A549 (cell line): ENCODE measurements at regions of chr15 and their contacts with region 1.

Region 1: GRCh38 chr15:89129123-89129815 is 41.0 kb downstream of the ABHD2 start:
- DNase-seq: peak; percentile 63 to 68
- ATAC-seq: peak; percentile 60 to 79; a peak in 3 of 6 replicates
- H3K4me3 ChIP-seq: no peak overlapping the region
- H3K27ac ChIP-seq: peak overlapping the region; percentile 69 to 74
- H3K4me1 ChIP-seq: peaks cover 57% of the 10 kb centered on the region
- CTCF ChIP-seq: peak; percentile 95
- EP300 ChIP-seq: no peak
- POLR2A ChIP-seq: no peak
- RAD21 ChIP-seq: peak; percentile 84 to 86

Region 2: GRCh38 chr15:89068325-89068784 is 60.9 kb before region 1 on chr15:
- CTCF ChIA-PET with region 1: interaction called, 18 read pairs
- POLR2A ChIA-PET with region 1: interaction called, 6 read pairs
- DNase-seq: peak in 1 of 2 experiments; percentile 46
- ATAC-seq: peak; percentile 67; a peak in 4 of 6 replicates
- H3K4me3 ChIP-seq: no peak overlapping the region
- H3K27ac ChIP-seq: peak overlapping the region; percentile 34 to 57; a peak in 4 of 6 replicates
- H3K4me1 ChIP-seq: peaks cover 25% of the 10 kb centered on the region; the same call in 2 of the 3 replicates
- CTCF ChIP-seq: no peak
- EP300 ChIP-seq: no peak
- POLR2A ChIP-seq: no peak
- RAD21 ChIP-seq: no peak

Region 3: GRCh38 chr15:89087830-89088604 is 41.3 kb before region 1 on chr15 and contains the start of gene ABHD2:
- CTCF ChIA-PET with region 1: interaction called, 76 read pairs
- POLR2A ChIA-PET with region 1: interaction called, 12 read pairs
- DNase-seq: peak; percentile 100
- ATAC-seq: peak; percentile 92 to 98
- H3K4me3 ChIP-seq: peak within 1 kb of the TSS; percentile 78
- H3K27ac ChIP-seq: peak within 1 kb of the TSS; percentile 80 to 88
- H3K4me1 ChIP-seq: peaks cover 44% of the 10 kb centered on the region
- CTCF ChIP-seq: no peak
- EP300 ChIP-seq: no peak
- POLR2A ChIP-seq: peak; percentile 70
- RAD21 ChIP-seq: 0 out of 5 replicates have a peak, but pooled peaks of 1 of the 2 experiments have one; percentile 30
- polyA plus RNA-seq, gene ABHD2: 63.3 and 76.4 TPM in 2 replicates

Region 4: DNA sequence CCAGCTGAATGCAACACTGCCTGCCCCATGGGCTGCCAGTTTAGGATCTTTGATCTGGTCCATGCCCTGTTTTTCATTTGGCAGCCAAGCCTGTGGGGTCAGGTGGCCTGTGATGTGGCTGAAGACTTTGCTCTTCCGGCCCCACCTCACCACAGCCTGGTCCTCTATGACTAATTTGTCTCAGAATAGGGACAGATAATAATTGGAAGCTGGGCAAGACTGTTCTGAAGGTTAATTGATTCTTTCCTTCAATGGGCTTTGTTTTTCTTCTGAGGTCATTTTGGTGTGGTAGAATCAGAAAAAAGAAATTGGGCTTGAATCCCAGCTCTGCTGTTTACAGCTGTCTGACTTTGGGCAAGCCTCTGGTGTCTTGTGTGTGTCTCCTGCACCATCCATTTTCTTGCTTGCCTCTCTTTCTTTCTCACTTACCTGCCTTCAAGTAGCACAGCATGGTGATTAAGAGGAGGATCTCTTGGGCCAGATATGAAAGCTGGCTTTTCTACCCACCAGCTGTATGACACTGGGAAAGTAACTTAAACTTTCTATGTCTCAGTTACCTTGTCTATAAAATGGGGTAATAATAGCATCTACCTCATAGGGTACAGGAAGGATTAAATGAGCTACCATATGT is 16.8 kb before region 1 on chr15:
- CTCF ChIA-PET with region 1: interaction called, 176 read pairs
- POLR2A ChIA-PET with region 1: no interaction called
- DNase-seq: peak in 1 of 2 experiments; percentile 71
- ATAC-seq: peak; percentile 55 to 65; a peak in 4 of 6 replicates
- H3K4me3 ChIP-seq: no peak overlapping the region
- H3K27ac ChIP-seq: peak overlapping the region; percentile 87 to 95
- H3K4me1 ChIP-seq: peaks cover 85% of the 10 kb centered on the region
- CTCF ChIP-seq: no peak
- EP300 ChIP-seq: 0 out of 5 replicates have a peak, but pooled peaks of 1 of the 2 experiments have one; percentile 16
- POLR2A ChIP-seq: no peak
- RAD21 ChIP-seq: no peak

Region 5: GRCh38 chr15:89150762-89151664 is 21.7 kb after region 1 on chr15:
- CTCF ChIA-PET with region 1: interaction called, 11 read pairs
- POLR2A ChIA-PET with region 1: no interaction called
- DNase-seq: no peak
- ATAC-seq: no peak
- H3K4me3 ChIP-seq: no peak overlapping the region
- H3K27ac ChIP-seq: no peak overlapping the region
- H3K4me1 ChIP-seq: peaks cover 7% of the 10 kb centered on the region; the same call in 2 of the 3 replicates
- CTCF ChIP-seq: no peak
- EP300 ChIP-seq: no peak
- POLR2A ChIP-seq: no peak
- RAD21 ChIP-seq: no peak

Region 6: DNA sequence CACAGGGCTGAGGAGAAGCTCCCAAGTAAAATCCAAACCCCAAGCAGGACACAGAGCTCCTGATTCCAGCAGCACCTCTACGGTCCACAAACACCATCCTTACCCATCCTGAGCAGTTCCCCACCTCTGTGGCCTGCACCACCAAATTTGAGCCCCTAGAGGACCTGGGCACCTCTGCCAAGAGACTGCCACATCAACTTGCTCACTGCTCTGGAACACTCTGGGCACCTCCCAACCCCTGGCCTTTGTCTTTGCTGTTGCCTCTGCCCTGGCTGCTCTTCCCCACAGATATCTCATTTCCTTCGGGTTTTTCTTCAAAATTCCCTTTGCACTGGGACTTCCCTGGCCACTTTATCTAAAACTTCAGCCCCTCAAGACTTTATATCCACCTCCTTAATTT is 86.4 kb after region 1 on chr15:
- CTCF ChIA-PET with region 1: no interaction called
- POLR2A ChIA-PET with region 1: no interaction called
- DNase-seq: no peak
- ATAC-seq: peak; percentile 41 to 54; a peak in 4 of 6 replicates
- H3K4me3 ChIP-seq: no peak overlapping the region
- H3K27ac ChIP-seq: no peak overlapping the region
- H3K4me1 ChIP-seq: no peaks in the 10 kb centered on the region
- CTCF ChIP-seq: no peak
- EP300 ChIP-seq: no peak
- POLR2A ChIP-seq: no peak
- RAD21 ChIP-seq: no peak